Panc1 (cell line): ENCODE measurements at regions of chr1 and their contacts with region 1.

Region 1: DNA sequence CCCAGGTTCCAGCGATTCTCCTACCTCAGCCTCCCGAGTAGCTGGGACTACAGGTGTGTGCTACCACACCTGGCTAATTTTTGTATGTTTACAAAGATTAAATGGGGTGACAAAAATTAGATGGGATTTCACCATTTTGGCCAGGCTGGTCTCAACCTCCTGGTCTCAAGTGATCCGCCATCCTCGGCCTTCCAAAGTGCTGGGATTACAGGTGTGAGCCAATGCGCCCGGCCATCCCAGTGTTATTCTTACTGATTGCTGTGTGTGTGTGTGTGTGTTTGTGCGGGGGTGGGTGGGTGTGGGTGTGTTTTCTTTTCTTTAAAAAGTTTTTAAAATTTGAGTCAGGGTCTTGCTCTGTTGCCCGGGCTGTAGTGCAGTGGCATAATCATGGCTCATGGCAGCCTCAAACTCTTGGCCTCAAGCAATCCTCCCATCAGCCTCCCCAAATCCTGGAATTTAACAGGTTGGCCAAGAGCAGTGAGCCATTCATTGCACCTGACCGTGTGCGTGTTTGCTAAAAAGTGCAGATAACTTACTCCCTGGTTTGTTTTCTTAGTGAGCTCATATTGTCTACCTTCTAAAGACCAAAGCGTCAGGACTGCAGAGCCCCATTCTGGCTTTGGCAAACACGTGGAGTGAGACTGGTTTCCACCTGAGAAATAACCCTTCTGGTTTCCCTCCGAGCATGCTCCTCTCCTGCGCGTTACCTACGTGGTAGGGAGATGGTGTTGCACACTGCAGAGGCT is 32.4 kb upstream of the CA6 start:
- DNase-seq: no peak
- ATAC-seq: no peak
- H3K4me3 ChIP-seq: no peak overlapping the region
- H3K27ac ChIP-seq: peak overlapping the region; percentile 39; the same call in 1 of the 2 replicates
- H3K4me1 ChIP-seq: peaks cover 17% of the 10 kb centered on the region
- H3K27me3 ChIP-seq: no peaks in the 10 kb centered on the region
- CTCF ChIP-seq: no peak

Region 2: GRCh38 chr1:8987881-8988617 is 74.8 kb after region 1 on chr1:
- CTCF ChIA-PET with region 1: interaction called, 5 read pairs
- POLR2A ChIA-PET with region 1: no interaction called
- in situ Hi-C with region 1: no loop called
- intact Hi-C with region 1: loop called (anchors 1 kb)
- DNase-seq: no peak
- ATAC-seq: peak; percentile 64
- H3K4me3 ChIP-seq: no peak overlapping the region
- H3K27ac ChIP-seq: peak overlapping the region; percentile 82
- H3K4me1 ChIP-seq: peaks cover 40% of the 10 kb centered on the region
- H3K27me3 ChIP-seq: no peaks in the 10 kb centered on the region
- CTCF ChIP-seq: peak; percentile 97

Region 3: GRCh38 chr1:9010781-9011323 is 97.6 kb after region 1 on chr1:
- CTCF ChIA-PET with region 1: no interaction called
- POLR2A ChIA-PET with region 1: no interaction called
- in situ Hi-C with region 1: no loop called
- intact Hi-C with region 1: no loop called
- DNase-seq: no peak
- ATAC-seq: no peak
- H3K4me3 ChIP-seq: no peak overlapping the region
- H3K27ac ChIP-seq: no peak overlapping the region
- H3K4me1 ChIP-seq: no peaks in the 10 kb centered on the region
- H3K27me3 ChIP-seq: no peaks in the 10 kb centered on the region
- CTCF ChIP-seq: no peak

Region 4: DNA sequence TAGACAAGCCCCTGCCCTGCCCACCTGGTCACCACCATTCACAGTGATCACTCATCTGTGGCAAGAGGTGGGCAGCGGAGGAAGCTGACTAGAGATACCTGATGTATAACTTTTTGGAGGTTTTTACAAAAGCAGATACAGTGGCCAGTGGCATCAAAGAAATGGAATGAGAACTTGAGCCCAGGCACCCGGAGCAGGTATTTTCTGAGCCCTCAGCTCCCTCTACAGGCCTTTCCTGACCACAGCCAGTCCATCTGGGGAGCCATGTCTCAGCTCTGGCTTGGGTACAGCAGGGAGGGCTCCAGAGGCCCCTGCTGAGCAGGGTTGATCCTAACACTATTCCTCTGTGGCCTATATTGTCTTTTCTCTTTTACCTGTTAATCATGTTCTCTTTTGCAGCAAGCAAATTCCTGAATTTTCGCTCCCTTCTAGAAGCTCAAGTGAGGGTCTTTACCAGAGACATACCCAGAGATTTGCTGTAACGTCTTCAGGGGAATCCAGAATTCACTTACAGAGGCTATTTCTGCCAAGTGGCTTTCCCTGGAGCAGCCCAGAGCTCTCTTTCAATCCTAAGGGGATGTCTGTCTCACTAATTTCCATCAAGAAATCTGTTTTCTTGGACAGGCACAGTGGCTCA is 188.3 kb after region 1 on chr1:
- CTCF ChIA-PET with region 1: no interaction called
- POLR2A ChIA-PET with region 1: no interaction called
- in situ Hi-C with region 1: no loop called
- intact Hi-C with region 1: loop called (anchors 5 kb)
- DNase-seq: no peak
- ATAC-seq: peak; percentile 90
- H3K4me3 ChIP-seq: no peak overlapping the region
- H3K27ac ChIP-seq: no peak overlapping the region
- H3K4me1 ChIP-seq: no peaks in the 10 kb centered on the region
- H3K27me3 ChIP-seq: no peaks in the 10 kb centered on the region
- CTCF ChIP-seq: peak; percentile 85